ENCODE measurements at regions of chr1 and their contacts with region 1.

Region 1: DNA sequence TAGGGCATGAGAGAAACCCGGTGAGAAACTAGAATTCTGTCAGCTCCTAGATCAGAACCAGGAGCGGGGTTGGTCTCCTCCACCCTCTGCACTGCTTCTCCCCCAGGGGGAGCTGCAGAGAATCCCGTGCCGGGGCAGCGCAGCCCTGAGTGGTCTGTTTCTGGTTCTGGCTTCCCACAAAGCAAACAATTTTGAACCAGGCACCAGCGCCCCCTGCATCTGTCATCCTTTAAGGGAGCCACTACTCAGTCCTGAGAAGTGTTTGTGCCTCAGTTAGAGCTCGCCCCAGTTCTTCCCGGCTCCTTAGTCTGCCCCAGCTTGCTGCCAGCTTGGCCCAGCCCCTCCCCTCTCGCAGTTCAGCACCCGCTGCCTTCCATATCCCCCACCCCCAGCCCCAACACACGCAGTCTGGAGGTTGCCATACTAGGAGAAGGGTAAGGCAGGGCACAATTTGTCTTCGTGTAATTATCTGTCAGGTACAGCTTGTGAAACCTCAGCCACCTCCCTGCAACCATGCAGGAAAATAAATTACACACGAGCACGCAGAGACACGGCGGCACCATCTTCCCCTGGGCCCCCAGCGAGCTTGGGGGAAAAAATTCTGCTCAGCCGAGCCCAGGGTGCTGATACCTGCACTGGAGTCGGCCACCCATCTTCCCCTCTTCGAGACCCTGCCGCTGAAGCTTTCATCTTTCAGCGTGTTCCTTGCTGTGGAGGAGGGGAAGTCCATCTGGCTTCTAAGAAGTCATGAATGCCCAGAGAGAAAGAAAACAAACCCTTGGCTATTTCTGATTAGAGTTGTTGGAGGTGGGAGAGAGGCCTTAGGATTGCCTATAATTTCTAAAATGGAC is 62.6 kb upstream of the CD1D start:
- DNase-seq: peak; percentile 34
- ATAC-seq: peak; percentile 78
- H3K4me3 ChIP-seq: peak overlapping the region; percentile 7
- H3K27ac ChIP-seq: no peak overlapping the region
- H3K4me1 ChIP-seq: no peaks in the 10 kb centered on the region; the same call in 1 of the 2 replicates
- H3K27me3 ChIP-seq: peaks cover 37% of the 10 kb centered on the region
- CTCF ChIP-seq: peak; percentile 59
- POLR2A ChIP-seq: no peak
- RAD21 ChIP-seq: peak; percentile 34

Region 2: GRCh38 chr1:158045639-158046038 is 72.4 kb before region 1 on chr1:
- CTCF ChIA-PET with region 1: no interaction called
- POLR2A ChIA-PET with region 1: no interaction called
- dilution Hi-C with region 1: no loop called
- in situ Hi-C with region 1: no loop called
- intact Hi-C with region 1: loop called (anchors 2 kb)
- DNase-seq: peak; percentile 90
- ATAC-seq: peak; percentile 86
- H3K4me3 ChIP-seq: no peak overlapping the region
- H3K27ac ChIP-seq: peak overlapping the region; percentile 58; the same call in 1 of the 2 replicates
- H3K4me1 ChIP-seq: peaks cover 16% of the 10 kb centered on the region
- H3K27me3 ChIP-seq: no peaks in the 10 kb centered on the region
- CTCF ChIP-seq: no peak
- POLR2A ChIP-seq: no peak
- RAD21 ChIP-seq: no peak